ENCODE measurements at regions of chr5 and their contacts with region 1.

Region 1: DNA sequence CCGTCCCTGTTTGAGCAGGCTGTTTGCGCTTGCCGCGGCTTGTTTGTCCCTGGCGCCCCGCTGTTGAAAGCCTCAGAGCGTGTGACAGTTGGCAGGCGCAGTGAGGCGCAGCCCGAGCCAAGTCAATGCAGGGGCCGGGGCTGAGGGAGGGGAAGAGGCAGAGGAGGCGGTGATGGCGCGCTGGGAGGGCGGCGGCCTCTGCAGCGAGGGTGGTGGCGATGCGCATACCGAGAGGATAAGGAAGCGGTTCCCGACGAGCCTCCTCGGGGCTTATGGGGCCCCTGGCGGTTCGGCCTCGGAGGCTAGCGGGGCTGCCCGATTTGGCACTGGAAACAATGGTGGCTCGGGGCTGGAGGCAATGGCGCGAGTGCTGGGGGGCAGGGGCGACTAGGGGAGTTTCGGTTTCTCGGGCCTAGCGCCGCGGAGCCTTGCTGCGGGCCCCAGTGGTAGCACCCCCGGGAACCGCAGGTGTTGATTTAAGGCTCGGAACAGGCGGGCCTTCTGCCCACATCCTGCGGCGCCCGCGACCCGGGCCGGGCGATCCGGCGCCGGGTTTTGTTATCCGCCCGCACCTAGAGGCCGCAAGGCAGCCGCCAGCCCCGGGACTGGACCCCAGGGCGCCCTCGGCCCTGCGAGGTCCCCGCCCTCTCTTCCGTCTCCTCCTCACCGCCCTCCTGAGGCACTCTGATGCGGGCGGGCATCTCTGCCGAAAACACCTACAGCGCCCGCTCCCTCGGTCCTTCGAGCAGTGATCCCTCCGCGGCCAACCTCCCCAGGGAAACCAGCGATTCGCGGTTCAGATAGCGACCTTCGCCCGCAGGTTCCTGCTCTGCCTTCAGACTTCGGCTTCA is 947 bp upstream of the LNPEP start:
- DNase-seq: peak; percentile 95 to 98
- H3K4me3 ChIP-seq: peak overlapping the region; percentile 90
- H3K4me3 Mint-ChIP-seq: peak overlapping the region; percentile 97
- H3K27ac Mint-ChIP-seq: peak overlapping the region; percentile 97
- H3K4me1 ChIP-seq: peaks cover 13% of the 10 kb centered on the region; the same call in 1 of the 2 replicates
- H3K4me1 Mint-ChIP-seq: peaks cover 24% of the 10 kb centered on the region
- H3K27me3 ChIP-seq: no peaks in the 10 kb centered on the region
- H3K27me3 Mint-ChIP-seq: no peaks in the 10 kb centered on the region
- CTCF ChIP-seq: no peak

Region 2: GRCh38 chr5:96614110-96614691 is 320.7 kb before region 1 on chr5:
- CTCF ChIA-PET with region 1: no interaction called
- POLR2A ChIA-PET with region 1: no interaction called
- intact Hi-C with region 1: loop called (anchors 10 kb)
- DNase-seq: peak; percentile 73 to 82
- H3K4me3 ChIP-seq: no peak overlapping the region
- H3K4me3 Mint-ChIP-seq: no peak overlapping the region
- H3K27ac Mint-ChIP-seq: peak overlapping the region; percentile 8
- H3K4me1 ChIP-seq: peaks cover 7% of the 10 kb centered on the region
- H3K4me1 Mint-ChIP-seq: no peaks in the 10 kb centered on the region
- H3K27me3 ChIP-seq: no peaks in the 10 kb centered on the region
- H3K27me3 Mint-ChIP-seq: no peaks in the 10 kb centered on the region
- CTCF ChIP-seq: peak; percentile 33 to 82

Region 3: GRCh38 chr5:96807075-96807654 is 127.8 kb before region 1 on chr5:
- CTCF ChIA-PET with region 1: no interaction called
- POLR2A ChIA-PET with region 1: interaction called, 3 read pairs
- intact Hi-C with region 1: loop called (anchors 2 kb)
- DNase-seq: peak; percentile 66 to 74
- H3K4me3 ChIP-seq: peak overlapping the region; percentile 61
- H3K4me3 Mint-ChIP-seq: peak overlapping the region; percentile 85
- H3K27ac Mint-ChIP-seq: peak overlapping the region; percentile 88
- H3K4me1 ChIP-seq: peaks cover 17% of the 10 kb centered on the region
- H3K4me1 Mint-ChIP-seq: peaks cover 23% of the 10 kb centered on the region
- H3K27me3 ChIP-seq: no peaks in the 10 kb centered on the region
- H3K27me3 Mint-ChIP-seq: no peaks in the 10 kb centered on the region
- CTCF ChIP-seq: no peak

Region 4: GRCh38 chr5:96876292-96876850 is 58.6 kb before region 1 on chr5 and contains the start of gene ERAP2:
- CTCF ChIA-PET with region 1: no interaction called
- POLR2A ChIA-PET with region 1: no interaction called
- intact Hi-C with region 1: loop called (anchors 1 kb)
- DNase-seq: no peak
- H3K4me3 ChIP-seq: peak within 1 kb of the TSS; percentile 27
- H3K4me3 Mint-ChIP-seq: peak within 1 kb of the TSS; percentile 65
- H3K27ac Mint-ChIP-seq: peak within 1 kb of the TSS; percentile 56
- H3K4me1 ChIP-seq: peaks cover 7% of the 10 kb centered on the region; the same call in 1 of the 2 replicates
- H3K4me1 Mint-ChIP-seq: peaks cover 26% of the 10 kb centered on the region
- H3K27me3 ChIP-seq: no peaks in the 10 kb centered on the region
- H3K27me3 Mint-ChIP-seq: no peaks in the 10 kb centered on the region
- CTCF ChIP-seq: no peak
- total RNA-seq, gene ERAP2: 3.9 and 4.5 TPM in 2 replicates

Region 5: GRCh38 chr5:96946381-96946780 is 11.4 kb after region 1 on chr5:
- CTCF ChIA-PET with region 1: no interaction called
- POLR2A ChIA-PET with region 1: no interaction called
- intact Hi-C with region 1: no loop called
- DNase-seq: no peak
- H3K4me3 ChIP-seq: no peak overlapping the region
- H3K4me3 Mint-ChIP-seq: no peak overlapping the region
- H3K27ac Mint-ChIP-seq: no peak overlapping the region
- H3K4me1 ChIP-seq: no peaks in the 10 kb centered on the region; the same call in 1 of the 2 replicates
- H3K4me1 Mint-ChIP-seq: peaks cover 10% of the 10 kb centered on the region
- H3K27me3 ChIP-seq: no peaks in the 10 kb centered on the region
- H3K27me3 Mint-ChIP-seq: no peaks in the 10 kb centered on the region
- CTCF ChIP-seq: no peak

Region 6: GRCh38 chr5:96984506-96985192 is 49.7 kb after region 1 on chr5:
- CTCF ChIA-PET with region 1: no interaction called
- POLR2A ChIA-PET with region 1: no interaction called
- intact Hi-C with region 1: loop called (anchors 5 kb)
- DNase-seq: no peak
- H3K4me3 ChIP-seq: no peak overlapping the region
- H3K4me3 Mint-ChIP-seq: no peak overlapping the region
- H3K27ac Mint-ChIP-seq: no peak overlapping the region
- H3K4me1 ChIP-seq: no peaks in the 10 kb centered on the region; the same call in 1 of the 2 replicates
- H3K4me1 Mint-ChIP-seq: peaks cover 7% of the 10 kb centered on the region
- H3K27me3 ChIP-seq: no peaks in the 10 kb centered on the region
- H3K27me3 Mint-ChIP-seq: no peaks in the 10 kb centered on the region
- CTCF ChIP-seq: no peak

Region 7: GRCh38 chr5:97142521-97143254 is 207.8 kb after region 1 on chr5 and contains the start of gene LIX1:
- CTCF ChIA-PET with region 1: no interaction called
- POLR2A ChIA-PET with region 1: no interaction called
- intact Hi-C with region 1: loop called (anchors 1 kb)
- DNase-seq: peak; percentile 63 to 66
- H3K4me3 ChIP-seq: no peak within 1 kb of the TSS
- H3K4me3 Mint-ChIP-seq: peak within 1 kb of the TSS; percentile 63
- H3K27ac Mint-ChIP-seq: peak within 1 kb of the TSS; percentile 29
- H3K4me1 ChIP-seq: peaks cover 12% of the 10 kb centered on the region
- H3K4me1 Mint-ChIP-seq: peaks cover 16% of the 10 kb centered on the region
- H3K27me3 ChIP-seq: no peaks in the 10 kb centered on the region
- H3K27me3 Mint-ChIP-seq: no peaks in the 10 kb centered on the region
- CTCF ChIP-seq: peak; percentile 69 to 76
- total RNA-seq, gene LIX1: 4.0 and 4.1 TPM in 2 replicates

Region 8: GRCh38 chr5:98928873-98929696 is 1994.2 kb after region 1 on chr5 and contains the start of gene CHD1:
- CTCF ChIA-PET with region 1: no interaction called
- POLR2A ChIA-PET with region 1: no interaction called
- intact Hi-C with region 1: loop called (anchors 10 kb)
- DNase-seq: peak; percentile 96
- H3K4me3 ChIP-seq: peak within 1 kb of the TSS; percentile 83
- H3K4me3 Mint-ChIP-seq: peak within 1 kb of the TSS; percentile 79
- H3K27ac Mint-ChIP-seq: peak within 1 kb of the TSS; percentile 98
- H3K4me1 ChIP-seq: 0 out of 2 replicates have a peak, but pooled peaks cover 2% of the 10 kb centered on the region
- H3K4me1 Mint-ChIP-seq: no peaks in the 10 kb centered on the region
- H3K27me3 ChIP-seq: no peaks in the 10 kb centered on the region
- H3K27me3 Mint-ChIP-seq: no peaks in the 10 kb centered on the region
- CTCF ChIP-seq: no peak
- total RNA-seq, gene CHD1: 51.1 and 52.5 TPM in 2 replicates